Mammary epithelial cell (primary cell): ENCODE measurements at regions of chr1 and their contacts with region 1.

Region 1: DNA sequence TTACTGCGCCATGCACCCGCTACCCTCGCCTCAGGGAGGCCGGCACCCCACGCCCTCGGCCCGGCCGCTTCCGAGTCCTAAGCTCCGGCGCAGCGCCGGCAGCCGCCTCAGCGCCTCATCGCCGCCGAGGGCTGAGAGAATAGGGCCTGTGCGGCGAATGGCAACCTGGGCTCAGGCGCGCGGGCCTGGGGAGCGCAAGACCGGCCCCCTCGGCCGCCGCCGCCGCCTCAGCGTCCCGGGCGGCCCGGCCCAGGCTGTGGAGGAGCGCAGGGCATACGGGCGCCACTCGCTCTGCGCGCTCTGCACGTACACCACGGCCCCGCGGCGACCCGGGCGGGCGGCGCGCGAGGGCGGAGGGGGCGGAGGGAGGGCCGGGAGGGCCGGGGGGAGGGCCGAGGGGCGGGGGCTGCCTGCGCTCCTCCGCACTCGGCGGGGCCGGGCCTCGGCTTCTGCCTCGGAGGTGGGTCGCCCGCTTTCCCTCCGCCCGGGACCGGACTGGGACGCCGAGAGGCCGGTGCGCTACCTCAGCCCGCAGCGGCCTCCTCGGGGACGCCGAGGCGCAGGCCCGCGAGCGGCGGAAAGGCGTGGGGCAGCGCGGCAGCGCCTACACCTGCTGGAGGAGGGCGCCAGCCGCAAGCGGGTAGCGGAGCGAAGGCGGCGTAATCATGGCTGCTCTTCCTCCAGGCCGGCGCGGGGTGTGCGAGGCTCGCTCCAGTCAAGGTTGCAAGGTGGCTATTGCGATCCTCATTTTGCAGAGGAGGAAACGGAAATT is at the start of gene EGLN1:
- DNase-seq: peak; percentile 87
- H3K4me3 ChIP-seq: peak within 1 kb of the TSS; percentile 84 to 85 (median 84)
- H3K27ac ChIP-seq: peak within 1 kb of the TSS; percentile 63
- H3K4me1 ChIP-seq: peaks cover 20% of the 10 kb centered on the region
- H3K27me3 ChIP-seq: no peaks in the 10 kb centered on the region
- CTCF ChIP-seq: peak; percentile 4 to 52
- total RNA-seq, gene EGLN1: 18.5 to 24.0 TPM

Region 2: GRCh38 chr1:231337472-231338269 is 84.5 kb before region 1 on chr1 and contains the start of gene EXOC8:
- CTCF ChIA-PET with region 1: no interaction called
- dilution Hi-C with region 1: loop called (anchors 5 kb)
- in situ Hi-C with region 1: no loop called
- intact Hi-C with region 1: no loop called
- DNase-seq: peak; percentile 97
- H3K4me3 ChIP-seq: peak within 1 kb of the TSS; percentile 62 to 99 (median 88)
- H3K27ac ChIP-seq: peak within 1 kb of the TSS; percentile 97
- H3K4me1 ChIP-seq: peaks cover 28% of the 10 kb centered on the region
- H3K27me3 ChIP-seq: no peaks in the 10 kb centered on the region
- CTCF ChIP-seq: no peak
- total RNA-seq, gene EXOC8: 12.7 to 16.5 TPM

Region 3: GRCh38 chr1:231369282-231369681 is 52.9 kb before region 1 on chr1:
- CTCF ChIA-PET with region 1: no interaction called
- dilution Hi-C with region 1: no loop called
- in situ Hi-C with region 1: no loop called
- intact Hi-C with region 1: loop called (anchors 1 kb)
- DNase-seq: no peak
- H3K4me3 ChIP-seq: no peak overlapping the region
- H3K27ac ChIP-seq: no peak overlapping the region
- H3K4me1 ChIP-seq: no peaks in the 10 kb centered on the region
- H3K27me3 ChIP-seq: no peaks in the 10 kb centered on the region
- CTCF ChIP-seq: peak in 1 of 2 donors; percentile 28

Region 4: GRCh38 chr1:231407547-231408396 is 14.4 kb before region 1 on chr1:
- CTCF ChIA-PET with region 1: no interaction called
- dilution Hi-C with region 1: no loop called
- in situ Hi-C with region 1: no loop called
- intact Hi-C with region 1: loop called (anchors 2 kb)
- DNase-seq: peak; percentile 60
- H3K4me3 ChIP-seq: peak overlapping the region in 2 of 3 experiments; percentile 3 to 27
- H3K27ac ChIP-seq: peak overlapping the region; percentile 25
- H3K4me1 ChIP-seq: peaks cover 20% of the 10 kb centered on the region
- H3K27me3 ChIP-seq: no peaks in the 10 kb centered on the region
- CTCF ChIP-seq: no peak

Region 5: DNA sequence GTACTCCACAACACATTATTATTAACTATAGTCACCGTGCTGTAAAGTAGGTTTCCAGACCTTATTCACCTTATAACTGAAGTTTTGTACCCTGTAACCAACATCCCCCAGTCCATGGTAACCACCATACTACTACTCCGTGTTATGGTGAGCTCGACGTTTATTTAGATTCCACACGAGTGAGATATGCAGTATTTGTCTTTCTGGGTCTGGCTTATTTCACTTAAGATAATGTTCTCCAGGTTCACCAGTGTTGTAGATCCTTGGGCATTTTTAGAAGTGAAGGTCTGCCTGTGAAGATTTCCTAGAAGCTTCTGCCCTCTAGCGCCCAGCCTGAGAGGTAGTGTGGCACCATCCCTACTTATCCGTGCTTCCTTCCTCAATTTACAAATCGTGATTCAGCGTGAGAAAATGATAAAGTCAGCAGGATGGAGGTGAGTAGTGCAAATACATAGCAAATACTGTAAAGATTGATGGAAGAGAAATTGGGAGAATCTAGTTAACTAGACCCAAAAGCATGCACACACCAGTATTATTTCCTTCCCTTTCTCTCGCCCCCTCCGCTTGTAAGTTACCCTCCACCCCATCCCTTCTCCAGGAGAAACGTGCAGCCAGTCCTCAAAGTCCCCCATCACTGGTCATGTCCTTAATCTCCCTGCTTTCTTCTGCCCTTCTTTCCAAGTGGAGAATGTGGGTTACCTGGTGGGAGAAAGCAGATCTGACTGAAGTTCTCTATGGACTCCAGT is 168.4 kb after region 1 on chr1:
- CTCF ChIA-PET with region 1: no interaction called
- dilution Hi-C with region 1: no loop called
- in situ Hi-C with region 1: no loop called
- intact Hi-C with region 1: loop called (anchors 2 kb)
- DNase-seq: peak; percentile 51
- H3K4me3 ChIP-seq: no peak overlapping the region
- H3K27ac ChIP-seq: no peak overlapping the region
- H3K4me1 ChIP-seq: no peaks in the 10 kb centered on the region
- H3K27me3 ChIP-seq: no peaks in the 10 kb centered on the region
- CTCF ChIP-seq: peak; percentile 71 to 80